ENCODE measurements at regions of chr19 and their contacts with region 1.

Region 1: DNA sequence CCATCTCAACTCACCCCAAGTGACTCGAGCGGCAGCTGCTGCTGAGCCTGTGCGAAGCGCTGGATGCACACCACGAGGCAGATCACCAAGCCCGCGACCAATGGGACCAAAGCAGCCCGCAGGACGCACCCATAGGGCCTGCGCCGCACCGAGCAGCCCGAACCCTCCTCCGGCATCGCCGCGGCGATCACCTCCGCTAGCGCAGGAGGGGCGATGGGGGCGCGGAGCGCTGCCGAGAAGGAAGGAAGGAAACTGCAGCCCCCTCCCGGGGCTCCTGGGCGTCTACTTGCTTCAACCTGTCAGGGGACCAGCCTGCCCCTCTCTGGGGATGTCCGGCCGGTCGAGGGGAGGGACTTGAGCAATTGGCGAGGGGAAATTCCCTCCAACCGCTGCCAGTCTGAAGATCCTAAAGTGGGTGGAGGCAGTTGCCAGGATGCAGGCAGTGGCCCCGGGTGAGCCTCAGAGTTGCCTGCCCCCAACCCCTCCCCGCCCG is at the start of gene CD70:
- DNase-seq: peak; percentile 75
- ATAC-seq: peak; percentile 75
- H3K4me3 Mint-ChIP-seq: peak within 1 kb of the TSS; percentile 67
- H3K27ac Mint-ChIP-seq: no peak within 1 kb of the TSS
- H3K4me1 Mint-ChIP-seq: peaks cover 64% of the 10 kb centered on the region
- H3K27me3 Mint-ChIP-seq: peaks cover 65% of the 10 kb centered on the region
- total RNA-seq, gene CD70: 3.3 to 3.6 TPM

Region 2: DNA sequence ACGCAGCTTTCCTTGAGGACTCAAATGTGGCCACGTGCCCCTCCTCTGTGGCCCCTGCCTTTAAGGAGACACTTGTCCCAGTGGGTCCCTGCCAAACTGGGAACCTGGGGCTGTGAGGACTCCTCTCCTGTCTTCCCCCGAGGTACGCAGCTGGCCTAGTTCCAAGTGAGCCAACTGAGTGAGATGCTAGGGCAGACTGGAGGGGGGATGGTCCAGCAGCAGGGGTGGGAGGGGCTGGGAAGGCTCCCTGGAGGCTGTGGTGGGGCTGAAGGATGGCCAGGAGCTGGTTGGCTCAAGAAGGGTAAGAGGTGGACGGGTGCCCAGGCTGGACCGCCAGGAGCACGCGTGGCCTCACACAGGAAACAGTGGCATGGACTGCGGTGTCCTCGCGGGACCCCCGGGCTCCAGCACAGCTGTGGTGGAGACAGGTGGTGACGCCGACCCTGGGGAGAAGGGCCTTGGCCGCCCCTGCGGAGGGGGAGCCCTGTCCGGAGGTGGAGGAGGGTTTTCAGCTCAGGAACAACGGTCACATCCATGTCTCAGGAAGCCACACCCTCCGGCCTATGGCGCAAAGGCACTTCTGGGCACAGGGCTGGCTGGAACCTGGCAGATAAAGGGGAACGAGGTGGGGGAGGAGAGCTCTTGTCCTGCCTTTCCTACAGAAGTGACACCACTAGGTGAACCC is 356.9 kb before region 1 on chr19:
- CTCF ChIA-PET with region 1: no interaction called
- POLR2A ChIA-PET with region 1: no interaction called
- intact Hi-C with region 1: no loop called
- DNase-seq: no peak
- ATAC-seq: no peak
- H3K4me3 Mint-ChIP-seq: no peak overlapping the region
- H3K27ac Mint-ChIP-seq: no peak overlapping the region
- H3K4me1 Mint-ChIP-seq: peaks cover 32% of the 10 kb centered on the region
- H3K27me3 Mint-ChIP-seq: no peaks in the 10 kb centered on the region

Region 3: GRCh38 chr19:6556480-6557195 is 34.2 kb before region 1 on chr19:
- CTCF ChIA-PET with region 1: interaction called, 3 read pairs
- POLR2A ChIA-PET with region 1: no interaction called
- intact Hi-C with region 1: loop called in 1 of 2 experiments (anchors 5 kb)
- DNase-seq: peak; percentile 41
- ATAC-seq: peak; percentile 45
- H3K4me3 Mint-ChIP-seq: no peak overlapping the region
- H3K27ac Mint-ChIP-seq: no peak overlapping the region
- H3K4me1 Mint-ChIP-seq: peaks cover 5% of the 10 kb centered on the region
- H3K27me3 Mint-ChIP-seq: no peaks in the 10 kb centered on the region